Heart left ventricle (tissue), 16 donors: ENCODE measurements at regions of chr9 and their contacts with region 1.

Region 1: GRCh38 chr9:38720083-38720745 is at the start of gene FAM240B:
- DNase-seq: no peak
- ATAC-seq: no peak
- H3K4me3 ChIP-seq: no peak within 1 kb of the TSS
- H3K27ac ChIP-seq: no peak within 1 kb of the TSS
- H3K4me1 ChIP-seq: no peaks in the 10 kb centered on the region
- H3K27me3 ChIP-seq: no peaks in the 10 kb centered on the region
- CTCF ChIP-seq: no peak
- POLR2A ChIP-seq: no peak
- total RNA-seq, gene FAM240B: not detected

Region 2: GRCh38 chr9:38311382-38312270 is 408.6 kb before region 1 on chr9:
- intact Hi-C with region 1: no loop called
- DNase-seq: no peak
- ATAC-seq: peak; percentile 48 to 72 (median 67)
- H3K4me3 ChIP-seq: peak overlapping the region in 8 of 12 donors; percentile 10 to 52 (median 30)
- H3K27ac ChIP-seq: peak overlapping the region in 6 of 12 donors; percentile 11 to 76 (median 48)
- H3K4me1 ChIP-seq: peaks cover 0 to 25% (median 9%) of the 10 kb centered on the region in 12 donors
- H3K27me3 ChIP-seq: peaks cover 0 to 9% (median 0%) of the 10 kb centered on the region in 9 donors
- CTCF ChIP-seq: no peak
- POLR2A ChIP-seq: no peak

Region 3: DNA sequence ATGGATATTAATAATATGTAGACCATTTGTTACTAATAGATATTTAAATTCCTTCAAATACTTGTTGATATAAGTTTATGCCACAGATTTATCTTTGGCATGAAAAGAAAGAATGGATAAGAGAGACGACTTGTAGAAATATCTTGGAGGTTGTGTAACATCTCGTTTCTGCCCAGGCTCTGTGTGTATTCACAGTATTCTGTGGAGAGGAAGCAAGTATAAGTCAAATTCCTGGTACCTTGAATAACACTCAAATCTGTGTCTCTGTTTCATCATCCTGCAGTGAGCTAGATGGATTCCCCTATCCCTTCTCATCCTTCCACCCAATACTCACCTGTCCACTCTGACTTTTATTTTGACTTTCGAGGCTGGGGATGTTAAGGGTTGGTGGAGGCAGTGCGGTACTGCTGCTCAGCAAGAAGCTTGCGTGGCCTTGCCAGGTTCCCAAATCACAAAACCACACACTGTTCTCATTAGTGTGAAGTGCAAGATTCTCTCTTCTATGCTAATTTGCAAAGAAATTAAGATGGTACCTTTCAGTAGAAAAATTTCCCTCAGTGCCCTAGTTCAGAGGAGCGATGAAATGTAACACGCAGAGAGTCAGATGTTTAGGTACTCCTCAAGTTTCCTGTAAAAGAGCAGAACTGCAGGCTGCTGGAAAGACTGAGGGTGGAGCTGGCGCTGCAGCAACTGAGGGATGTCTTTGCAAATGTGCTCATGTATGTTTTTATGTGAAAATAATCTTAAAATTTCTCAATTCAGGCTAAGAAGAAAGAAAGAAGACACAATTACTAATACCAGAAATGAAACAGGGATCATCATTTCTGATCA is 57.2 kb before region 1 on chr9:
- intact Hi-C with region 1: loop called in 2 of 10 experiments (anchors 5 to 10 kb)
- DNase-seq: no peak
- ATAC-seq: peak in 3 of 4 donors; percentile 37 to 61 (median 47)
- H3K4me3 ChIP-seq: no peak overlapping the region
- H3K27ac ChIP-seq: no peak overlapping the region
- H3K4me1 ChIP-seq: no peaks in the 10 kb centered on the region
- H3K27me3 ChIP-seq: peaks cover 0 to 5% (median 0%) of the 10 kb centered on the region in 9 donors
- CTCF ChIP-seq: peak in 5 of 12 donors; percentile 11 to 43 (median 28)
- POLR2A ChIP-seq: no peak

Region 4: GRCh38 chr9:38677660-38678303 is 42.4 kb before region 1 on chr9:
- intact Hi-C with region 1: loop called in 1 of 10 experiments (anchors 5 kb)
- DNase-seq: peak; percentile 43 to 81 (median 73)
- ATAC-seq: peak; percentile 72 to 94 (median 88)
- H3K4me3 ChIP-seq: no peak overlapping the region
- H3K27ac ChIP-seq: peak overlapping the region in 6 of 12 donors; percentile 15 to 58 (median 46)
- H3K4me1 ChIP-seq: peaks cover 0 to 17% (median 0%) of the 10 kb centered on the region in 12 donors
- H3K27me3 ChIP-seq: no peaks in the 10 kb centered on the region
- CTCF ChIP-seq: no peak
- POLR2A ChIP-seq: no peak

Region 5: GRCh38 chr9:38732885-38733284 is 12.7 kb after region 1 on chr9:
- intact Hi-C with region 1: loop called in 1 of 10 experiments (anchors 1 kb)
- DNase-seq: no peak
- ATAC-seq: no peak
- H3K4me3 ChIP-seq: no peak overlapping the region
- H3K27ac ChIP-seq: no peak overlapping the region
- H3K4me1 ChIP-seq: no peaks in the 10 kb centered on the region
- H3K27me3 ChIP-seq: no peaks in the 10 kb centered on the region
- CTCF ChIP-seq: no peak
- POLR2A ChIP-seq: no peak